OCI-LY7 (cell line): ENCODE measurements at regions of chr2 and their contacts with region 1.

Region 1: DNA sequence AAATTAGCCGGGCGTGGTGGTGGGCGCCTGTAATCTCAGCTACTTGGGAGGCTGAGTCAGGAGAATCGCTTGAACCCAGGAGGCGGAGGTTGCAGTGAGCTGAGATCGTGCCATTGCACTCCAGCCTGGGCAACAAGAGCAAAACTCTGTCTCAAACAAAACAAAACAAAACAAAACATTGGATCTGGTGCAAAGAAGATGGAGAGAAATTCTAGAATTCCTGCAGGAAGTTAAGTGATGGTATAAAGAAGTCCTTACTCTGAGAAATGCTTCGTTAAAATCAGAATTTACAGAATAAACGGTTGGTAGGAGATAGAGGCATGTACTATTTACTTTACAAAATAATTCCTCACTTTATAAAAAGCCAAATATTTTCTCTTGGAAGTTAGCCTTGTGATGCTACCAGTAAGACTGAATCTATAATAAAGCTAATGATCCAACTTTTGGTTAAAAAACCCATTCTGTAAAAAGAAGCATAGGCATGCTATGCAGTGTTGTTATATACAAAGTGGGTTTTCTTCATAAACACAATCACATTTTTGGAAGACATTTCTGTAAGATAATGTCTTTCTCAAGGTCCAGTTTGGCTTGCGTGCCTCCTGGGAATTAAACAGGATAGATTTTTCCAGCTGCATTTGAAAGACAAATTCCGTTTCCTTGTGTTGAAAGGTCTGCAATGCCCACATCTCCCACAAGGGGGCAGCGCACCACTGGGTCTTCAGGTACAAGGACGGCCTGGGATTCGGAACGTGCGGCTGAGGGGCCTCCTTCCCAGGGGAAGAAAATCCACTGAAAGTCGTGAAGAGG is 35.6 kb upstream of the PNO1 start:
- DNase-seq: peak; percentile 78
- H3K4me3 ChIP-seq: peak overlapping the region; percentile 47
- H3K27ac ChIP-seq: peak overlapping the region; percentile 96
- H3K4me1 ChIP-seq: peaks cover 48% of the 10 kb centered on the region
- CTCF ChIP-seq: peak; percentile 100

Region 2: GRCh38 chr2:68062680-68063387 is 59.2 kb before region 1 on chr2 and contains the start of gene C1D:
- CTCF ChIA-PET with region 1: interaction called, 3 read pairs
- POLR2A ChIA-PET with region 1: interaction called, 6 read pairs
- intact Hi-C with region 1: loop called (anchors 5 kb)
- DNase-seq: peak; percentile 93
- H3K4me3 ChIP-seq: peak within 1 kb of the TSS; percentile 93
- H3K27ac ChIP-seq: peak within 1 kb of the TSS; percentile 50
- H3K4me1 ChIP-seq: peaks cover 21% of the 10 kb centered on the region
- CTCF ChIP-seq: no peak
- total RNA-seq, gene C1D: 19.1 and 30.1 TPM in 2 replicates

Region 3: DNA sequence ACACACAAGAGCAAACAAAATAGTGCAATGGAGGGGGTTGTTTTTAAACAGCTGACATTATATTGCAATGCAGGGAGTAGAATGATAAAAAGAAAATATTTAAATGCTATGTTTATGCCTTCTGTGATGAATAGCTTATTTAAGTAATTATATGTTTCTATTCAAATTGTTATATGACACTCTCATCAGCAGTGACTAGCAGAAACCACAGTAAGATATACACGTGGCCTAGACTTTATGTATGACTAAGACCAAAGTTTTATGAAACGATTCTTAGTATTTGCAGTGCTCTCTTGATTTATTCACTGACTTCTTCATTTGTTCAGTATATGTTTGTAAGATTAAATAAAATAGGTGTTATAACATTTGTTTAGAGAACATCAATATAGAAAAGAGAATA is 33.1 kb before region 1 on chr2:
- CTCF ChIA-PET with region 1: no interaction called
- POLR2A ChIA-PET with region 1: no interaction called
- intact Hi-C with region 1: no loop called
- DNase-seq: no peak
- H3K4me3 ChIP-seq: no peak overlapping the region
- H3K27ac ChIP-seq: no peak overlapping the region
- H3K4me1 ChIP-seq: peaks cover 28% of the 10 kb centered on the region
- CTCF ChIP-seq: no peak

Region 4: GRCh38 chr2:68157402-68158133 is 35.5 kb after region 1 on chr2 and contains the start of gene PNO1:
- CTCF ChIA-PET with region 1: no interaction called
- POLR2A ChIA-PET with region 1: interaction called, 4 read pairs
- intact Hi-C with region 1: loop called (anchors 5 kb)
- DNase-seq: peak; percentile 96
- H3K4me3 ChIP-seq: peak within 1 kb of the TSS; percentile 100
- H3K27ac ChIP-seq: peak within 1 kb of the TSS; percentile 76
- H3K4me1 ChIP-seq: peaks cover 28% of the 10 kb centered on the region
- CTCF ChIP-seq: no peak
- total RNA-seq, gene PNO1: 18.6 and 26.3 TPM in 2 replicates

Region 5: GRCh38 chr2:68169297-68169696 is 47.2 kb after region 1 on chr2:
- CTCF ChIA-PET with region 1: no interaction called
- POLR2A ChIA-PET with region 1: no interaction called
- intact Hi-C with region 1: no loop called
- DNase-seq: peak; percentile 20
- H3K4me3 ChIP-seq: no peak overlapping the region
- H3K27ac ChIP-seq: no peak overlapping the region
- H3K4me1 ChIP-seq: peaks cover 7% of the 10 kb centered on the region
- CTCF ChIP-seq: no peak; the same call in 1 of the 2 replicates

Region 6: DNA sequence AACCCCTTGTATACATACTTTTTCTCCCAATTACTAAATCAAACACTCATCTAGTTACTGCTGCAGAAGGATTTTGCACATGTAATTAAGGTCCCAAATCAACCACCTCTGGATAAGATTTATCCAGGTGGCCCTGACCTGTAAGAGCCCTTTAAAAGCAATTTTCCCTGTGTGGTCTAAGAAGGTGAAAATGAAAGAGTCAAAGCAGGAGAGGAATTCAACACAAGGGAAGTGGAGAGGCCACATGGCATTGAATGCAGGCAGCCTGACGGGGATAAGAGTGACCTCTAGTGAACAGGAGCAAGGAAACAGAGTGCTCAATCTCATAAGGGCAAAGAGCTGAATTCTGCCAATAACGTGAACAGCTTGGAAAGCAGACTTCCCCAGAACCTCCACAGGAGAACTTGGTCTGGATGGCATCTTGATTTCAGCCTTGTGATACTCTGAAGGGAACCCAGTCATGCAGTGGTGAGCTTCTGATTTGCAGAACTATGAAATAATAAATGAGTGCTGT is 103.1 kb after region 1 on chr2:
- CTCF ChIA-PET with region 1: no interaction called
- POLR2A ChIA-PET with region 1: interaction called, 4 read pairs
- intact Hi-C with region 1: loop called (anchors 1 kb)
- DNase-seq: peak; percentile 53
- H3K4me3 ChIP-seq: no peak overlapping the region
- H3K27ac ChIP-seq: peak overlapping the region; percentile 5
- H3K4me1 ChIP-seq: peaks cover 31% of the 10 kb centered on the region
- CTCF ChIP-seq: peak; percentile 77

Region 7: DNA sequence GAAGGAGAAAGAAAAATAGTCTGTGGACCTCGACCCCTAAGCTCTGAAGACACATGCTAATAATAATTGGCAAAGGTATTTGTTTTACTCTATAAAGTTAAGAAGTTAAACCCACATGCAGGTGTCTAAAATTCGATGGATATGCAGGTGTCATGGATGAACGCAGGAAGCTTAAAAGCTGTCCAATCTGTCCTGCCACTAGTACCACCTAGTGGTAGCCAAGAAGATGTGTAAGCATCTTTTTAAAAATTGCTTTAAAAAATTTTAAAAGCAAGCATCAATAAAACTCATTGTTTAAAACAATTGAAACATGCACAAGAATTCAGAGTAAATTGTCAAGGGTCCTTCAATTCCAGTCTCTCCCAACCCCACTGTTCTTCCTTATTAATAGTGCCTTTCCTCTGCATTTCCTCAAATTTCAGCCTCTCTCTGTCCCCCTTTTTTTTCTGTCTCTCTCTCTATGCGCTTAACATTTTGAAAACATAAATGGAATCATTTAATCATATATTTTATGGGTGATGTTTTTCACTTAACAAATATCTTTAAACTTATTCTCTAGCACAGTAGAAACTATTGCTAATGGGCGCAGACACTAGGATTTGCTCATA is 160.8 kb after region 1 on chr2:
- CTCF ChIA-PET with region 1: interaction called, 6 read pairs
- POLR2A ChIA-PET with region 1: interaction called, 5 read pairs
- intact Hi-C with region 1: loop called (anchors 1 kb)
- DNase-seq: peak; percentile 74
- H3K4me3 ChIP-seq: no peak overlapping the region
- H3K27ac ChIP-seq: no peak overlapping the region
- H3K4me1 ChIP-seq: peaks cover 7% of the 10 kb centered on the region
- CTCF ChIP-seq: peak; percentile 96